Heart left ventricle (tissue), 16 donors: ENCODE measurements at regions of chr2 and their contacts with region 1.

Region 1: GRCh38 chr2:21310493-21310892 is 186.7 kb downstream of the TDRD15 start:
- DNase-seq: no peak
- ATAC-seq: no peak
- H3K4me3 ChIP-seq: no peak overlapping the region
- H3K27ac ChIP-seq: no peak overlapping the region
- H3K4me1 ChIP-seq: peaks cover 0 to 4% (median 0%) of the 10 kb centered on the region in 12 donors
- H3K27me3 ChIP-seq: no peaks in the 10 kb centered on the region
- CTCF ChIP-seq: no peak
- POLR2A ChIP-seq: no peak

Region 2: GRCh38 chr2:21181957-21182356 is 128.5 kb before region 1 on chr2:
- intact Hi-C with region 1: loop called in 3 of 10 experiments (anchors 2 kb)
- DNase-seq: no peak
- ATAC-seq: no peak
- H3K4me3 ChIP-seq: no peak overlapping the region
- H3K27ac ChIP-seq: no peak overlapping the region
- H3K4me1 ChIP-seq: no peaks in the 10 kb centered on the region
- H3K27me3 ChIP-seq: no peaks in the 10 kb centered on the region
- CTCF ChIP-seq: no peak
- POLR2A ChIP-seq: no peak